A673 (cell line): ENCODE measurements at regions of chr11 and their contacts with region 1.

Region 1: GRCh38 chr11:46006418-46007070 is 84.1 kb downstream of the LARGE2 start:
- DNase-seq: peak; percentile 95
- H3K4me3 ChIP-seq: no peak overlapping the region
- H3K27ac ChIP-seq: no peak overlapping the region
- H3K4me1 ChIP-seq: peaks cover 28% of the 10 kb centered on the region
- H3K27me3 ChIP-seq: no peaks in the 10 kb centered on the region
- CTCF ChIP-seq: peak; percentile 100

Region 2: DNA sequence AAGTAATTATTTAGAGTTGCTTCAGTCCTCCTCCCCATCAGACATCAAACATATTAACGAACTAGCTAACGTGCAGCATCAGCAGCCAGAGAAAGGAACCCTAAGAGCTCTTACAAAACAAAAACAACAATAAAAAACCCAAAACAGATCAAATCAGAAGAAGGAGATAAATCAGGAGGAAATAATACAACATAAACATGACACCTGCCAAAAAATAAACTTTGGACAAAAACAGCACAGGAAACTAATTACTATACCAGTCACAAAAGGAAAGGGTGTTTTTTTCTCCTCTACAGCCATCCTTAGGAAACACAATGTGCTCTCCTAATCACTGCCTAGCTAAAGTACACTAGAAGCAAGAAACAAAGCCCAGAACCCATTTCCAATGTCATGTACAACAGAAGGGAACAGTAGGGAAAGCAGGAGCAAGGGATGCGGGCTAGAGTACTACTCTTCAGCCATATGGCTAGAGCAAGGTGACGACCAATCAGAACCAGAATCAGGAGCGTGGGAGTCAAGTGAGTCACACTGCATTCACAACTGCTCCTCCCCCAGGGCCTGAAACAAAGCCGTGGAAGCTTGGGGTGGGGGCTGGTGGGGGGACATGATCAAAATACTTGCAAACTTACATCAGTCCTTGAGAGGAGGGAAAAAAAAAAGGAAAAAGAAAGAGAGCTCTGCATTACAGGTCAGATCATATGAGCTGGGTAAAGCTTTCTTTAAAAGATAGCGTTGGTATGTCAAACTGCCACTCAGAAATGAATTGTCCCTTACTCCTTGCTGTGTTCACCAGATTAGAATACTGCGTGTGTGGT is 23.7 kb before region 1 on chr11:
- CTCF ChIA-PET with region 1: interaction called, 13 read pairs
- POLR2A ChIA-PET with region 1: interaction called, 9 read pairs
- intact Hi-C with region 1: no loop called
- DNase-seq: peak; percentile 96
- H3K4me3 ChIP-seq: peak overlapping the region; percentile 11
- H3K27ac ChIP-seq: peak overlapping the region; percentile 83
- H3K4me1 ChIP-seq: peaks cover 46% of the 10 kb centered on the region
- H3K27me3 ChIP-seq: no peaks in the 10 kb centered on the region
- CTCF ChIP-seq: no peak

Region 3: DNA sequence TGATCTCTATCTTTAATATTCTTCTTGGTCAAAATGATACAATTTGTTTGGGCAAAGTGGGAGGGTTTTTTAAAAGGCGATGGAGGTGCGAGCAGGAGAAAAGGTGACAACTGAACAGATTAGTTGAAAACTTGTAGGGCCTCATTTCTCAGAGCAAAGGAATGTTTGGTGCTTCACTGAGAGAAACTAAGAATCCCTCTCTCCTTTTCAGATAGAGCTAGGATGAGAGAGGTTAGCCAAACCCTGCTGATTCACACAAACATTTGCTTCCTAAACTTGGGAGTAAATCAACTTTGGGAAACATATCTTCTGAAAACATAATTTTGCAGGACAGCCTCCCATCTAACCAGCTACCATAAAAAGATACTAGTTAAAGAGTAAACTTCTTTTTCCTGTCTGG is 57.7 kb after region 1 on chr11:
- CTCF ChIA-PET with region 1: no interaction called
- POLR2A ChIA-PET with region 1: no interaction called
- intact Hi-C with region 1: loop called (anchors 5 kb)
- DNase-seq: no peak
- H3K4me3 ChIP-seq: no peak overlapping the region
- H3K27ac ChIP-seq: no peak overlapping the region
- H3K4me1 ChIP-seq: no peaks in the 10 kb centered on the region
- H3K27me3 ChIP-seq: no peaks in the 10 kb centered on the region
- CTCF ChIP-seq: no peak

Region 4: DNA sequence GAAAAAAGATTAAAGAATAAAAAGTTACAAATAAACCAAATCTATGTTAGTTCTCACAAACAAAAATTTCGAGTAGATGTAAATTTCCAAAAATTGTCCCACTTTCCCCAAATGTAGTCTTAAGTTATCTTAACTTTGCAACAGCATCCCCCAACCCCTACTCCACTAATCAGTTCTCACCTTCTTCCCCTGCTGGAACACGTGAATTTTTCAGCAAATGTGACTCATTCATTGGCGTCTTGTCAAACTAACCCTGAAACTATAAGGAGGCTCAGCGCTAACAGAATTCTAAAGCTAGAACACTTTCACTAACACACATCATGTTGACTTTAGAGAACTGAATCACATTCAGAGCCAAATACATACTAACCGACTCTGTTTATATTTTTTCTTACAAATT is 68.6 kb after region 1 on chr11:
- CTCF ChIA-PET with region 1: no interaction called
- POLR2A ChIA-PET with region 1: no interaction called
- intact Hi-C with region 1: no loop called
- DNase-seq: peak; percentile 33
- H3K4me3 ChIP-seq: no peak overlapping the region
- H3K27ac ChIP-seq: no peak overlapping the region
- H3K4me1 ChIP-seq: no peaks in the 10 kb centered on the region
- H3K27me3 ChIP-seq: no peaks in the 10 kb centered on the region
- CTCF ChIP-seq: no peak